ENCODE measurements at regions of chr16 and their contacts with region 1.

Region 1: DNA sequence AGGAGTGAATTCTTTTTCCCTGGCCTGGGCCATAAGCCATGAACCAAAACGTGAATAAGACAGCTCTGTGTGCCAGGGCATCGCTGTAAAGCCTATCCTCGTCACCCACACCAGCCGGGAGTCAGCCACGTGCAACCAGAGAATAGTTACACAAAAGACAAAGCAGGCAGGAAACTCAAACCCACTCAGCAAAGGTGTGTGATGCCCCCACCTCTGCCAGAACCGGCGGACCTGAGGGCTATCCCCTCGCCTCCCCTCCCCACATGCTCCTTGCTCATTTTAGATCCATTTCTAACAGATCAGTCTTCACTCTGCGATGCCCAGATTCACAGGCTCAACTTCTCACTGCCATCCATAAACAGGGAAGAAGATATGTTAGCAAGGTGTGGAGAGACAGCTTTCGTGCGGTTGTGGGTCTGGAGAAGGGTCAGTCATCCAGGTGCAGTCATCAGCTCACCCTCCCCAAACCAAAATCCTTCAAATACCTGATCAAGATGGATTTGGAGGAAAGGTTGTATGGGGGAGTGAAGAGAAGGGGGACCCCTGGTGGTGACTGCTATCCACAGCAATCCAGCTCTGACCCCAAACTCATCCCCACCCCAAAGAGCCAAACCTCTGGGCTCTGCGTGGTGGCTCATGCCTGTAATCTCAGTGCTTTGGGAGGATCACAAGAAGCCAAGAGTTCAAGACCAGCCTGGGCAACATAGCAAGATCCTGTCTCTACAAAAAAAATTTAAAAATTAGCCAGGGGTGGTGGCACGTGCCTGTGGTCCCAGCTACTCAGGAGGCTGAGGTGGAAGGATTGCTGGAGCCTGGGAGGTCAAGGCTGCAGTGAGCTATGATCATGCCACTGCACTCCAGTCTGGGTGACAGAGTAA is 219.2 kb downstream of the C16orf78 start:
- DNase-seq: peak; percentile 79
- H3K4me3 ChIP-seq: no peak overlapping the region; a peak in 1 of 4 replicates
- H3K27ac ChIP-seq: peak overlapping the region in 1 of 2 experiments; percentile 66; a peak in 2 of 4 replicates
- H3K4me1 ChIP-seq: peaks cover 11 to 67% of the 10 kb centered on the region in 2 experiments; a peak in 3 of 4 replicates
- H3K27me3 ChIP-seq: no peaks in the 10 kb centered on the region
- CTCF ChIP-seq: peak; percentile 81
- EP300 ChIP-seq: no peak
- RAD21 ChIP-seq: peak; percentile 68

Region 2: GRCh38 chr16:49382916-49383315 is 209.9 kb before region 1 on chr16:
- CTCF ChIA-PET with region 1: no interaction called
- POLR2A ChIA-PET with region 1: no interaction called
- DNase-seq: no peak
- H3K4me3 ChIP-seq: no peak overlapping the region
- H3K27ac ChIP-seq: no peak overlapping the region
- H3K4me1 ChIP-seq: no peaks in the 10 kb centered on the region
- H3K27me3 ChIP-seq: peaks cover 9% of the 10 kb centered on the region; the same call in 1 of the 2 replicates
- CTCF ChIP-seq: peak; percentile 19; the same call in 1 of the 2 replicates
- EP300 ChIP-seq: no peak
- RAD21 ChIP-seq: no peak

Region 3: GRCh38 chr16:49407873-49408550 is 184.8 kb before region 1 on chr16:
- CTCF ChIA-PET with region 1: interaction called, 19 read pairs
- POLR2A ChIA-PET with region 1: no interaction called
- DNase-seq: peak; percentile 88
- H3K4me3 ChIP-seq: no peak overlapping the region
- H3K27ac ChIP-seq: no peak overlapping the region
- H3K4me1 ChIP-seq: peaks cover 0 to 3% of the 10 kb centered on the region in 2 experiments; a peak in 1 of 4 replicates
- H3K27me3 ChIP-seq: no peaks in the 10 kb centered on the region
- CTCF ChIP-seq: peak; percentile 76
- EP300 ChIP-seq: no peak
- RAD21 ChIP-seq: peak; percentile 99

Region 4: DNA sequence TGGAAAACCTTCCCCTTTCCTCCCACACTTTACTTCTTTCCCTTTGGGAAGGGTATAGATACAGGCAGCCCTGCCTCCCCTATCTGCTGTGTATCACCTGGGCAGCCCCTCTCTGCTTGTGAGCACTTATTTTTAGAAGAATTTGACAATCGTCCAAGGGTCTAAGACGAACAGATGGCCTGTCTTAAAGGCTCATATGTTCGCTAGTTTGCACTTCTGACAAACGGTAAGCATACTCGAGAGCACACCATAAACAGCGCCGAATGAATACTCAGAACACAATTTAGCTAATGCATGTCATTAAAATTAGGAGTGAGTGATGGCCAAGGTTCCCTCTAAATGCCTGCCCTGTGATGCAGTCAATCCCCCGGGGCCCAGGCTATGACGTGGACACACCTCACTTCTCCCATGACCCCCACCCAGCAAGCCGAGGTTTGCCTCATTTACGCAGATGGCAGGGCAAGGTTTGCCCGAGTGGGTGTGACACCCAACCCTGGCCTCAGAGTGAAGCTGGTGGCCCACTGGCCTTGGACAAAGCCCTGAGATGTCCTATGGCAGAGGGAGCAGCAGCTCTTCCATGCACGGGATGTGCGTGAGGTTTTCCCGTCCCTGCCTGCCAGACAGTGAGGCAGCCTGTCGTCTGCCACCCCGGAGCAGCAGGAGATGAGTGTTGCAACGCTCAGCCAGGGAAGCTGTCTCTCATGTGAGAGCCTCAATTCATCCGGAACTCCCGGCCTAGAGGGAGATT is 93.9 kb before region 1 on chr16:
- CTCF ChIA-PET with region 1: interaction called, 19 read pairs
- POLR2A ChIA-PET with region 1: no interaction called
- DNase-seq: no peak
- H3K4me3 ChIP-seq: no peak overlapping the region
- H3K27ac ChIP-seq: no peak overlapping the region
- H3K4me1 ChIP-seq: peaks cover 0 to 8% of the 10 kb centered on the region in 2 experiments; a peak in 1 of 4 replicates
- H3K27me3 ChIP-seq: no peaks in the 10 kb centered on the region
- CTCF ChIP-seq: no peak
- EP300 ChIP-seq: no peak
- RAD21 ChIP-seq: no peak

Region 5: DNA sequence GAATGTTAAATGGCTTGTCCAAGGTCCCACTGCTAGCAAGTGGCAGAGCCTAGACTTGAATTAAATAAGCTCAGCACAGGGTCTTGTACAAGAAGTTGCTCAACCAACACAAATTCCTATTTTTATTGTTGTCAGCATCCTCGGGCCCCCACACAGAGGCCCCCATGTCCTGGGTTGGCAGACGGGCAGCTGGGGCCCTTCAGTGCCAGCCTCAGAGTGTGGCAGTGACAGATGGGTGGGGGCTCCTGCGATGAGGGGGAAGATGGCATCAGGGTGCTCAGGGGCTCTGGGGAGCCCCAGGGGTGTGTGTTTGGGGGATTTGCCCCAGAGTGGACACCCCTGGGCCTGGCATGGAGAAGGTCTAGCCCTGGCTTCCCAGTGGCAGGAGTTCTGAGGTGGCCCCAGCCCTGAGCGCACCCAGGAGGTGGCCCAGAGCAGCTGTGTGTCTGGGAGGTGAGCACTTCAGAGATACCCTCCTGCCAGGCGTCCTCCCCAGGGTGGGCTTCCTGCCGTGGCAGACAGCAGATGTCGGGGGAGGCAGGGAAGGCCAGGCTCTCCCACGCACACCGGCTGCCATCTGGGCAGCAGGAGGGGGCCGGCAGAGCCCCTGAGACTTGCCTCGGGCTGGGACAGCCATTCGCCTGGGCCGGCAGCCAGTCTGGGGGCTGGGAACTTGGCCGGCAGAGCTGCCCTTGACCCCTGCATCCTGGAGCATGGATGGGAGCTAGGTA is 68.4 kb before region 1 on chr16:
- CTCF ChIA-PET with region 1: interaction called, 25 read pairs
- POLR2A ChIA-PET with region 1: no interaction called
- DNase-seq: peak; percentile 92
- H3K4me3 ChIP-seq: no peak overlapping the region
- H3K27ac ChIP-seq: peak overlapping the region in 1 of 2 experiments; percentile 98; a peak in 2 of 4 replicates
- H3K4me1 ChIP-seq: peaks cover 9 to 80% of the 10 kb centered on the region in 2 experiments; a peak in 3 of 4 replicates
- H3K27me3 ChIP-seq: no peaks in the 10 kb centered on the region
- CTCF ChIP-seq: no peak
- EP300 ChIP-seq: peak in 1 of 2 experiments; percentile 85; a peak in 2 of 4 replicates
- RAD21 ChIP-seq: 0 out of 2 replicates have a peak, but pooled peaks have one; percentile 1

Region 6: DNA sequence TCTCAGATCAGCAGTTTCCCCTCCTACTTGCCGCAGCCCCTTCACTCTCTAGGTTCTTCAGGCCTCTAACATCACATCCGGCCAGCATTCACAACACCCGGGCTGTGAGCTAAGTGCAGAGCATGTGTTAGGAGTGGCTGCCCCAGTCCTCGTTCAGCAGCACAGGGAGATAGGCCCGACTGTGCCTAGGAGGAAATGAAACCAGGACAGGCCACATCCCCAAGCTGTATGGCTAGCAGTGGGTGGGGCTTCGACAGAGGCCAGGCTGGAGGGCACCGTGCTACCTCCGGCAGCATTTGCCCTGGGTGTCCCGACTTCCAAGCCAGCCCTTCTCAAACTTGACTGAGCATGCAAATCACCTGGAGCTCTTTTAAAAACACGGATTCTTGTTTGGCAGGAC is 17.4 kb before region 1 on chr16:
- CTCF ChIA-PET with region 1: interaction called, 42 read pairs
- POLR2A ChIA-PET with region 1: no interaction called
- DNase-seq: no peak
- H3K4me3 ChIP-seq: no peak overlapping the region
- H3K27ac ChIP-seq: no peak overlapping the region; a peak in 1 of 4 replicates
- H3K4me1 ChIP-seq: peaks cover 0 to 50% of the 10 kb centered on the region in 2 experiments; a peak in 1 of 4 replicates
- H3K27me3 ChIP-seq: no peaks in the 10 kb centered on the region
- CTCF ChIP-seq: no peak
- EP300 ChIP-seq: no peak
- RAD21 ChIP-seq: no peak

Region 7: DNA sequence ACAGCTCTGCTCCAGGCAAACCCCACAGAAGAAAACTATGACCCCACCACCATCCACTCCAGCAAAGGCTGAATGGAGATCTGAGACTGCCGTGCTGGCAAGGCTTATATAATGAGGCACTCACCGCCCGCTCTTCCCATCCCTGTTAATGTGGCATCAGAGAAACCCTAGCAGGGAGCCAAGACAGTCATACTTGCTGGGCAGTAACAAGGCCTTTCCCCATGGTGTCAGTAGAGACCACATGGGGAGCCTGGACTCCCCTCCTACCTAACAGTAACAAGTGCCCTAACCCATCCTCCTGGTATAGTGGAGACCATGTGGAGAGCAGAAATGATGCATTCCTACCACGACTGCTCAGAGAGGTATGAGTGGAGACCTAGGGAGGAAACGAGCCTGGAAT is 16.0 kb after region 1 on chr16:
- CTCF ChIA-PET with region 1: interaction called, 12 read pairs
- POLR2A ChIA-PET with region 1: no interaction called
- DNase-seq: peak; percentile 48
- H3K4me3 ChIP-seq: no peak overlapping the region
- H3K27ac ChIP-seq: peak overlapping the region in 1 of 2 experiments; percentile 20; a peak in 1 of 4 replicates
- H3K4me1 ChIP-seq: peaks cover 0 to 44% of the 10 kb centered on the region in 2 experiments; a peak in 2 of 4 replicates
- H3K27me3 ChIP-seq: no peaks in the 10 kb centered on the region
- CTCF ChIP-seq: peak; percentile 56
- EP300 ChIP-seq: no peak
- RAD21 ChIP-seq: peak; percentile 78

Measured in SK-N-SH (cell line).